Posterior cingulate gyrus (tissue), 11 donors: ENCODE measurements at regions of chr1 and their contacts with region 1.

Region 1: GRCh38 chr1:51421964-51422363 is 91.6 kb upstream of the TTC39A start:
- DNase-seq: no peak

Region 2: DNA sequence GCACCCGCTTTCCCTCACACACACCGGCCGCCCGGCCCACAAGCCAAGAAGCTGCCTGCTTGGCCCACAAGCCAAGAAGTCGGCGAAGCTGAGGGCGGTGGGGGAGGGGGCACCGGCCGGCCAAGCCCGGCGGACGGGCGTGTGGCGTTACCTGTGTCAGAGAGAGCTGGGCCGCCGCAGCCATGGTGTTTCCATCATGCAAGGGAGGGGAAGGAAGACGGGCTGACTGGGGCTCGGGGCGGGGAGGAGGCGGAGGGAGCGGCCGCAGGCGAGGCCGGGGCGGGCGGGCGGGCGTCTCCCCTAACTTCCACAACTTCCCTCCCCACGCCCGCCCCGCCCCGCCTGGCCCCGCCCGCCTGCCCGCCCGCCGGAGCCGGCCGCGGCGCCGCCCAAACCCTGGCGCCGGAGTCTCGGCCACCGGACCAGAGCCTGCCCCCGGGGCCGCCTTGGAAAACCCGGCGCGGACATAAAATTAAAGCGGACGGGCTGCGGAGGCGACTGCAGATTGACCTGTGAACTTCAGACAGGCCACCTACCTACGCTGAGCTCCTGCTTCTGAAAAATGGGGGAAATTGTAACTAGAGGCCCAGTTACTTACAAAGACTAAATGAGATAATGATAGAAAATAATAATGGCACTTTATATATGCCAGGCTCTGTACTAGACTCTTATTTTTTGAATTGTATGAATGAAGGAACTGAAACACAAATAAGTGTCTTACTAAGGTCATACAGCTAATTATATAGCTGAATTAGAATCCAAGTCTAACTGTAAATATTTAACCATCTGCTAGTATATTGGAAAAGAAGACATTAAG is 97.3 kb after region 1 on chr1 and contains the start of gene EPS15:
- intact Hi-C with region 1: loop called (anchors 10 kb)
- DNase-seq: peak; percentile 58 to 96 (median 70)

Region 3: DNA sequence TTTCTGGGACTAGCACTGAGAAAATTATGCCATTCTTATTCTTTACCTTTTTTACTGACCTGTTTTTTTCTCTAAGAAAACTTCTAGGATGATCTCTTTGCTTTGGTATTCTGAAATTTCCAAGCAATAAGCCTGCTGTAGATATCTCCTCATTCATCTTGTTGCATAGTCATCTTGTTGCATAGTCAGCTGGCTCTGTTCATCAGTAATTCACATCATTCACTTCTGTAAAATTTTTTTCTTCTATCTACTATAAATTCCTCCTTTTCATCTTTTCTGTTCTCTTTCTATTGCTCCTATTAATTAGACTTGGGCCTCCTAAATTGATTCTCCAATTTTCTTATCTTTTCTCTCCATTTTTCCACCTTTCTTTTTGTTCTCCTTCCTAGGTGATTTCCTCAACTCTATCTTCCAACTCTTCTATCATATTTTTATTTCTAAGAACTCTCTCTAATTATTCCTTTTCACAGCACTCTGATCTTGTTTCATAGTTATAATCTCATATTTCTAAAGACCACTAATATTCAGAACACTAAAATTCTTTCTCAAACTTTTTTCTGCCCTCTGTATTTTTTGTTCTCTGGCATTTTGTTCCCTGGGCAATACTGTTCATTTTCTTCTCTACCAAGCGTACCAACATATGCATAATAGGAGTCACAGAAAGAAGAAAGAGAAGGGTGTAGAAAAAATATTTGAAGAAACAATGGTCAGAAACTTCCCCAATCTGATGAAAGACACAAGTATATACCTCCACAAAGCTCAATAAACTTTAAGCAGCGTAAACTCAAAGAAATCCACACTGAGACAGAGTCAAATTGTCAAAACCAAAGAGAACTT is 1113.2 kb after region 1 on chr1:
- intact Hi-C with region 1: no loop called
- DNase-seq: no peak